ENCODE measurements at regions of chr10 and their contacts with region 1.

Region 1: DNA sequence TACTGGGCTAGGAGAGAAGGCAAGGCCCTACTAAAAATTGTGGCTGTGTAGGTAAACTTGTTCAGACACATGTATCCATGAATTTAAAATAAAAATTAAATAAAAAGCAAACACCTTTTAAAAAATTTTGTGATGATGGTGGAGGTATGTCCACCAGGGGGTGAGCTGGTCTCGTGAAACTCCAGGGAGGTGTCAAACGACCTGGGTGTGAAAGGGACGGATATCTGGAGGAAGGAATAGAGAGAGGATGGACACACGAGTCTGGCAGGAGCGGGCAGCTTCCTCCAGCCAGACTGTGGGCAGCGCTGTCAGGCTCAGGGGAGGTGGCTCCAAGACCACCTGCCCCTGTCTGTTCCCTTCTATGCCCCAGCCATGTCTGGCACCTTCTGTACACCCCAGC is 34.8 kb upstream of the DMBT1 start:
- DNase-seq: peak; percentile 42
- H3K4me3 ChIP-seq: no peak overlapping the region
- H3K27ac ChIP-seq: no peak overlapping the region
- H3K4me1 ChIP-seq: peaks cover 18% of the 10 kb centered on the region
- H3K27me3 ChIP-seq: no peaks in the 10 kb centered on the region
- CTCF ChIP-seq: peak; percentile 20 to 31
- POLR2A ChIP-seq: no peak

Region 2: DNA sequence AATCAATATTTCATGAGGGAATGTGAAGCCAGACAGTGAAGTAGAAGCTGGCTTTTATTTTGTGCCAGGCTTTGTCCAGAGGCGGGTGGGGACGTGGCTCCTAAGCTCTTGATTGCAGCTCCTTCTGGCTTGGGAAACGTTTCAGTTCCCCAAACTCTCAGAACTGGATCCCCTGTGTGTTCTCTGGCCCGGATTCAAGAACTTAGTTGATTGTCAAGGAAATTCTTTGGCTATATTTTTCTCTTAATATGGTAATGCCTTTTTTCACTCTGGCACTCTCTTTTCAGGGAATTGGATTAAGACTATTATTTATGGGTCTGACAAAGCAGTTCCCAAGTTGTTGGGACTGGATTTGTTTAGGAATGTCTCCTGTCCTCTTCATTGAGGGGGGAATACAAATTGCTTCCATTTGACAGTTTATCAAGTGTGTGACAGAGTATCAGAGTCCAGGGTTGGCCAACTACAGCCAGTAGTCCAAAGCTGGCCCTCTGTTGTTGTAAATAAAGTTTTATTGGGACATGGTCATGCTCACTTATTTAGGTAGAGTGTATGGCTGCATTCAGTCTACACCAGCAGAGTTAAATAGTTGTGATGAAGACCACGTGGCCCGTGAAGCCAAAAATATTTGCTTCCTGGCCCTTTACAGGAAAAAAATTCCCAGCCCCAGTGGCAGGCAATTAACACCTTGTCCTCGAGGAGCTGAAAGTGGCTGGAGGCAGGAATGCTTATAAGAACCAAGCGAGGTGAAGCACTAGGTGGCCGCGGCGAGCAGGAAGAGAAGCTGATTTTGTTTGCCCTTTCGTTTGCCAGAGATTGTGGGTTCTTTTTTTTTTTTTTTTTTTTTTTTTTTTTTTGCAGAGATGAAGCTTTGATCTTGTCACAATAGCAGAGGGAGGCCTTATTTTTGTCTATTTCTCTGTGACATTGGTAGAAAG is 30.1 kb before region 1 on chr10:
- CTCF ChIA-PET with region 1: interaction called, 3 read pairs
- POLR2A ChIA-PET with region 1: interaction called, 3 read pairs
- dilution Hi-C with region 1: no loop called
- intact Hi-C with region 1: loop called (anchors 1 kb)
- DNase-seq: peak; percentile 72
- H3K4me3 ChIP-seq: peak overlapping the region in 1 of 3 experiments; percentile 32
- H3K27ac ChIP-seq: peak overlapping the region; percentile 91
- H3K4me1 ChIP-seq: peaks cover 32% of the 10 kb centered on the region
- H3K27me3 ChIP-seq: no peaks in the 10 kb centered on the region
- CTCF ChIP-seq: no peak
- POLR2A ChIP-seq: no peak

Region 3: GRCh38 chr10:122504610-122504950 is 21.2 kb before region 1 on chr10:
- CTCF ChIA-PET with region 1: interaction called, 5 read pairs
- POLR2A ChIA-PET with region 1: no interaction called
- dilution Hi-C with region 1: no loop called
- intact Hi-C with region 1: loop called (anchors 2 kb)
- DNase-seq: peak; percentile 94
- H3K4me3 ChIP-seq: no peak overlapping the region
- H3K27ac ChIP-seq: peak overlapping the region; percentile 11
- H3K4me1 ChIP-seq: peaks cover 9% of the 10 kb centered on the region
- H3K27me3 ChIP-seq: no peaks in the 10 kb centered on the region
- CTCF ChIP-seq: no peak
- POLR2A ChIP-seq: no peak

Region 4: DNA sequence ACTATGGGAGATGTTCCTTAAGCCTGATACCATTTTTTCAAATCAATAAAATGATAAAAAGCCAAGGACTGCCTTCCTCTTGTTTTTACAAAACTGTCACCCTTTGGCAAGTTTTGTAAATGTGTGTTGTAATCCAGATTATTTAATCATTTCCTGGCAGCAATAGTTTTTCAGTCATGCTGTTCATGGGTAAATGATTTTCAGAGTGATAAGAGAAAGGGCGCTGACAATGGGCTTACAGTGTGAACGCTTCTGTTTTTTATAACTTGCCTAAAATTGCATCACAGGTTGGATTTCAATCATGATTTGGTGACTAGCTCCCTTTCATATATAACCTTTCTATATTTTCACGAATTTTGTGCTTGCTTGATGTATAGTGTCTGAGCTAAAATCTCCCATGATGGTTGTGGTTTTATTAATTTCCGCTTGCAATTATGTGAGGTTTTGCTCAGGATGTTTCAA is 15.8 kb after region 1 on chr10:
- CTCF ChIA-PET with region 1: interaction called, 4 read pairs
- POLR2A ChIA-PET with region 1: no interaction called
- dilution Hi-C with region 1: no loop called
- intact Hi-C with region 1: loop called (anchors 1 kb)
- DNase-seq: peak; percentile 60
- H3K4me3 ChIP-seq: no peak overlapping the region
- H3K27ac ChIP-seq: no peak overlapping the region
- H3K4me1 ChIP-seq: peaks cover 6% of the 10 kb centered on the region
- H3K27me3 ChIP-seq: no peaks in the 10 kb centered on the region
- CTCF ChIP-seq: no peak
- POLR2A ChIP-seq: no peak

Region 5: GRCh38 chr10:122703439-122704118 is 177.8 kb after region 1 on chr10:
- CTCF ChIA-PET with region 1: no interaction called
- POLR2A ChIA-PET with region 1: no interaction called
- dilution Hi-C with region 1: no loop called
- intact Hi-C with region 1: loop called (anchors 5 kb)
- DNase-seq: peak; percentile 55
- H3K4me3 ChIP-seq: no peak overlapping the region
- H3K27ac ChIP-seq: no peak overlapping the region
- H3K4me1 ChIP-seq: no peaks in the 10 kb centered on the region
- H3K27me3 ChIP-seq: peaks cover 0 to 2% of the 10 kb centered on the region in 2 experiments
- CTCF ChIP-seq: peak; percentile 74 to 90
- POLR2A ChIP-seq: no peak